Panc1 (cell line): ENCODE measurements at regions of chr7 and their contacts with region 1.

Region 1: DNA sequence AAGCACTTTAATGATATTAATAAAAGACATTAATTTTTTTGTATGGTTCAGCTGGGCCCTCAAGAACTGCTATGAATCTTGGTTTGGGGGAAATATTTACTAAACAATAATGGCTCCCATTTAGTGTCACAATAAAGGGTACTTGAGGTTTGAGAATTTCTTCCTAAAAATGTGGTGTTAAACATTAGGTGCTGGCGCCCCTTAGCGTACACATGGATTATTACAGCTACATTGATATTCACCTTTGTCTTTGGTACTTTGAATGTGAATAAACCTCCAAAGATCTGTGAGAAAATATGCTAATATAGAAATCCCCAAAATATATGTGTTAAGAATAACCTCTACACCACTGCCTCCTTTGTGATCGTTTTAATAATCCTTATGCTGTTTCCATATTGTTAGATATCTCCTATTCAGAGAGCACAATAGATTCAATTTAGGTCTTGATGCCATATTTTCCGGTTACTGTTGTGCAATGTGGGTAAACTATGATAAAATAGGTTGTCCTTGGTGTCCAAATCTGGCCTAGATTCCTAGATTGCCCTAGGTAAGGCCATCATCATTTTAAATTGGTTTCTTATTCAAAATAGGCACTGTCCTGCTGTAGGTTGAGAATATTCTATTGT is 161.8 kb upstream of the CACNA2D1 start:
- DNase-seq: no peak
- ATAC-seq: no peak
- H3K4me3 ChIP-seq: no peak overlapping the region
- H3K27ac ChIP-seq: no peak overlapping the region
- H3K4me1 ChIP-seq: no peaks in the 10 kb centered on the region
- H3K27me3 ChIP-seq: no peaks in the 10 kb centered on the region
- CTCF ChIP-seq: peak; percentile 79

Region 2: DNA sequence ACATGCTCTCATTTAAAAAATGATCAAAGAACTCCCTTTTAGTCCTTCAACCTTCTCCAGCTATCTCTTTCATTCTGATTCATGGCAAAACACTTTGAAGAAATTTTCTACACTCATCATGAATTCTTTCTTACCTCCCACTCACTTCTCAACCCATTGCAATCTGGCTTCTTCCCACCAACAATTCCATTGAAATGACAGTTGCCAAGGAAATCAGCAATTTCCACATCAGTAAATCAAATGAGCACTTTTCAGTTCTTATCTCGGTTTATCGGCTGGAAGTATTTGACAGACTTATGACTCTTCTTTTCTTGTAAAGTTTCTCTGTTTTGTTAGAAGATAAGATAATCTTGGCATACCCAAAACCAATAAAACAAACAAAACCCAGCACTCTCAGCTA is 62.7 kb before region 1 on chr7:
- CTCF ChIA-PET with region 1: no interaction called
- POLR2A ChIA-PET with region 1: no interaction called
- in situ Hi-C with region 1: no loop called
- intact Hi-C with region 1: no loop called
- DNase-seq: no peak
- ATAC-seq: no peak
- H3K4me3 ChIP-seq: no peak overlapping the region
- H3K27ac ChIP-seq: no peak overlapping the region
- H3K4me1 ChIP-seq: no peaks in the 10 kb centered on the region
- H3K27me3 ChIP-seq: no peaks in the 10 kb centered on the region; the same call in 1 of the 2 replicates
- CTCF ChIP-seq: no peak

Region 3: DNA sequence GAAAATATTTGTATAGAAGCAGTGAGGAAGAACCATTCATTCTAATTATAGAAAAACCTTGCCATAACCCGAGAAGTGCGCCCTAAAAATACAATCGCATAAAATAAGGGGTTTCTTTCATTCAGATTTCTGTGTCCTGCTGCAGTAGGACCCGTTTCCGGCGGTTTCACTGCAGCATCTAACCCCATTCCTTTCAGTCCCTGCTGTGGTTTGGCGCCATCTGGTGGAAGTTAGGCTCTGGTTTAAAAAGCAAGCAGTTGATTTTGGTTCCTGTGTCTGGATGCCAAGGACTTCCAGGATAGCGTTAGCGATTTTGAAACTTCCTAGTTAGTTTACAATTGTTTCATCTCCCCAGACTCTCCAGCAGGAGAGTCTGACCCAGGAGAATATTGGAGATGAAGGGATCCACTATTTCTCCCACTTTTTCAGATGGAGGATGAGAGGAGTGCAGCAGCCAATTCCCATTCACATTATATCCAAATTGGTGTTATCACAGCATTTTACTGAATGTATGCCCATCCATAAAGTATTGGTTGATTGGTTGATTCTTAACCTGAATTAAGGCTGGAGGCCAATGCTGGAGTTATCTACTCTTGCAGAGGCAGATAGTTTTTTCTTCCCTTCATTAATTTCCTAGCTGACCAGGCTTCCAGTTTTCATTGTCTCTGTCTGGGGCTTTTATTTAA is 33.0 kb before region 1 on chr7:
- CTCF ChIA-PET with region 1: no interaction called
- POLR2A ChIA-PET with region 1: no interaction called
- in situ Hi-C with region 1: no loop called
- intact Hi-C with region 1: no loop called
- DNase-seq: peak; percentile 80
- ATAC-seq: peak; percentile 96
- H3K4me3 ChIP-seq: peak overlapping the region in 1 of 2 experiments; percentile 25; a peak in 2 of 4 replicates
- H3K27ac ChIP-seq: no peak overlapping the region
- H3K4me1 ChIP-seq: no peaks in the 10 kb centered on the region
- H3K27me3 ChIP-seq: no peaks in the 10 kb centered on the region
- CTCF ChIP-seq: peak; percentile 93

Region 4: GRCh38 chr7:82615527-82615926 is 10.2 kb after region 1 on chr7:
- CTCF ChIA-PET with region 1: no interaction called
- POLR2A ChIA-PET with region 1: no interaction called
- in situ Hi-C with region 1: no loop called
- intact Hi-C with region 1: no loop called
- DNase-seq: no peak
- ATAC-seq: no peak
- H3K4me3 ChIP-seq: no peak overlapping the region
- H3K27ac ChIP-seq: no peak overlapping the region
- H3K4me1 ChIP-seq: no peaks in the 10 kb centered on the region
- H3K27me3 ChIP-seq: no peaks in the 10 kb centered on the region
- CTCF ChIP-seq: no peak

Region 5: GRCh38 chr7:82729172-82730030 is 124.0 kb after region 1 on chr7:
- CTCF ChIA-PET with region 1: no interaction called
- POLR2A ChIA-PET with region 1: interaction called, 6 read pairs
- in situ Hi-C with region 1: no loop called
- intact Hi-C with region 1: loop called (anchors 5 kb)
- DNase-seq: peak; percentile 33
- ATAC-seq: no peak
- H3K4me3 ChIP-seq: no peak overlapping the region
- H3K27ac ChIP-seq: no peak overlapping the region
- H3K4me1 ChIP-seq: no peaks in the 10 kb centered on the region
- H3K27me3 ChIP-seq: no peaks in the 10 kb centered on the region
- CTCF ChIP-seq: peak; percentile 75; the same call in 1 of the 2 replicates